Activated naive CD4-positive, alpha-beta T cell treated with anti-CD3 and anti-CD28 coated beads for 36 hours (primary cell): ENCODE measurements at regions of chr13 and their contacts with region 1.

Region 1: GRCh38 chr13:40597740-40598370 is 68.6 kb downstream of the FOXO1 start:
- DNase-seq: peak; percentile 24
- H3K4me3 Mint-ChIP-seq: peak overlapping the region; percentile 17
- H3K27ac Mint-ChIP-seq: peak overlapping the region; percentile 93
- H3K4me1 Mint-ChIP-seq: peaks cover 90% of the 10 kb centered on the region
- H3K27me3 Mint-ChIP-seq: no peaks in the 10 kb centered on the region

Region 2: GRCh38 chr13:39998166-39998565 is 599.7 kb before region 1 on chr13:
- CTCF ChIA-PET with region 1: no interaction called
- intact Hi-C with region 1: no loop called
- DNase-seq: peak; percentile 41
- H3K4me3 Mint-ChIP-seq: no peak overlapping the region
- H3K27ac Mint-ChIP-seq: peak overlapping the region; percentile 25
- H3K4me1 Mint-ChIP-seq: peaks cover 25% of the 10 kb centered on the region
- H3K27me3 Mint-ChIP-seq: no peaks in the 10 kb centered on the region

Region 3: GRCh38 chr13:40190641-40191100 is 407.2 kb before region 1 on chr13:
- CTCF ChIA-PET with region 1: no interaction called
- intact Hi-C with region 1: loop called (anchors 5 kb)
- DNase-seq: peak; percentile 91
- H3K4me3 Mint-ChIP-seq: peak overlapping the region; percentile 36
- H3K27ac Mint-ChIP-seq: peak overlapping the region; percentile 81
- H3K4me1 Mint-ChIP-seq: peaks cover 69% of the 10 kb centered on the region
- H3K27me3 Mint-ChIP-seq: no peaks in the 10 kb centered on the region

Region 4: DNA sequence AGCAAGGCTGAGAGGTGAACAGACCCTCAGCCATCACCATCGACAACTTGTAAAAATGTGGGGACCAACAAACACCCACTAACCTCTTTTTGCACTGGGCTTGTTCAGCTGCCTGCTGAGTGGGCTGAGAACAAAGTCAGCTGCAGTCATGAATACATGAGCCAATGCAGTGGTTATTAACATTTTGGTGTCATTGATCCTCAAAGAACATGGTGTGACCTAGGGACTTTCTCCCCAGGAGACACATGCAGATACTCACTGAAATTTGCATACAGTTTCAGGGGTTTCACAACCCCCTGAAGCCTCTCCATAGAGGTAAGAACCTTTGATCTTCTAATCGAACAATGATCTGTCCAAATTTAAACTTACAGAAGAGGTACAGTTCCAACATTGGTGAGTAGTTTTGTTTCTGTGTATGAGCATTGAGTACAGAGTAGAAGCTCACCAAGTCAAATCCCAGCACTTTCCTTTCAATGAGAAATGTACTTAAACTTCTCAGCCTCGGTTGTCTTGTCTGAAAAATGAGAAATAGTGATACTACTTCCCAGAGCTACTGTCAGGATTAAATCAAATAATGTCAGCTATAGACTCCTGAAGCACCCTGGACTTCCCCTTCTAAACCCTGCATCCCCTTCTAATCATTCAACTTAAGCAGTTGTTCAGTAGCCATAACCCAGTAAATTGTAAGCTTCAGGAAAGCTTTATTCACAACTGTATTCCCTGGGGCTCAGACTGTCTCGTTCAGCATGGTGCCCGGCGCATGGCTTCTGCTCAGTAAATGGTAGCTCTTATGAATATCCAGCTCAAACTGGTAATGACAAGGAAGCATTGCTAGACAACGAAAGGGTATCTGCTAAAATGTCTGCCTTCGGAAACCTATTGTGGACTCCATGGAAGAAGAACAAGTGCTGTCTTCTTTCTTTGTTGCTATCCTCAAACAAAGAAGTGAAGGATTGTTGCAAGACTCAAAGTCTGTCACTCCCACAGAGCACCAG is 80.1 kb before region 1 on chr13:
- CTCF ChIA-PET with region 1: no interaction called
- intact Hi-C with region 1: loop called (anchors 2 kb)
- DNase-seq: peak; percentile 57
- H3K4me3 Mint-ChIP-seq: peak overlapping the region; percentile 23
- H3K27ac Mint-ChIP-seq: peak overlapping the region; percentile 87
- H3K4me1 Mint-ChIP-seq: peaks cover 78% of the 10 kb centered on the region
- H3K27me3 Mint-ChIP-seq: no peaks in the 10 kb centered on the region

Region 5: GRCh38 chr13:40613192-40613818 is 15.4 kb after region 1 on chr13:
- CTCF ChIA-PET with region 1: no interaction called
- intact Hi-C with region 1: loop called (anchors 1 kb)
- DNase-seq: peak; percentile 73
- H3K4me3 Mint-ChIP-seq: peak overlapping the region; percentile 71
- H3K27ac Mint-ChIP-seq: peak overlapping the region; percentile 95
- H3K4me1 Mint-ChIP-seq: peaks cover 93% of the 10 kb centered on the region
- H3K27me3 Mint-ChIP-seq: no peaks in the 10 kb centered on the region

Region 6: DNA sequence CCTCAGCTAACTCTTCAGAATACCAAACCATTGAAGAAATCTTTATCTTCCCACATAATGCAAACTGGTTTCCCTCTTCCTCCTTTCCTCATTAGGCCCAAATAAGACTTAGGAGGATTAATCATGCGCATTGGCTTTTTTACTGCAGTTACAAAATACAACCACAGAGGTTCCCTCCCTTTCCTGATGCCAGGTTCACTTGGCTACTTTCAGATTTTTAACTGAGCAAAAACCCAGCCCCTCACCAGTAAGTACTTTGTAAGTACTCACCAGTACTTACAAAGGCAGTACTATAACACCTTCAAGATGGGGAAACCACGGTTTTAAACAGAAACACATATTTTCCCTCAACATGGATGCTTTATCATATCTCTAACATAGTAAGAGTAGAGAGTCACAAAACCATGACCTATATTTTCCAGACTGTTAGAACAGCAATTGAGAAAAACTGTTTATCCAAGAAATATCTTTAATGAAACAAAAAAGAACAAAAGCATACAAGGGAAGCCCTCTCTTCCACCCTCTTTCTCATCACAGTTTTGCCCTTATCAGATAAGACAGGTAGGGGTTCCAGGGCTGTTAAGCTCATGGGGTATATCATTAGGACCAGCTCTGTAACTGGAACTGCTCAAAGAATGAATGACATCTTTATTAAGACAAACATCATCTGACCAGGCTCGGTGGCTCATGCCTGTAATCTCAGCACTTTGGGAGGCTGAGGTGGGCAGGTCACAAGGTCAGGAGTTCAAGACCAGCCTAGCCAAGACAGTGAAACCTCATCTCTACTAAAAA is 55.9 kb after region 1 on chr13:
- CTCF ChIA-PET with region 1: no interaction called
- intact Hi-C with region 1: loop called (anchors 2 kb)
- DNase-seq: no peak
- H3K4me3 Mint-ChIP-seq: peak overlapping the region; percentile 58
- H3K27ac Mint-ChIP-seq: peak overlapping the region; percentile 95
- H3K4me1 Mint-ChIP-seq: peaks cover 94% of the 10 kb centered on the region
- H3K27me3 Mint-ChIP-seq: no peaks in the 10 kb centered on the region